Activated CD4-positive, alpha-beta T cell treated with anti-CD3 and anti-CD28 coated beads for 36 hours (primary cell): ENCODE measurements at regions of chr1 and their contacts with region 1.

Region 1: DNA sequence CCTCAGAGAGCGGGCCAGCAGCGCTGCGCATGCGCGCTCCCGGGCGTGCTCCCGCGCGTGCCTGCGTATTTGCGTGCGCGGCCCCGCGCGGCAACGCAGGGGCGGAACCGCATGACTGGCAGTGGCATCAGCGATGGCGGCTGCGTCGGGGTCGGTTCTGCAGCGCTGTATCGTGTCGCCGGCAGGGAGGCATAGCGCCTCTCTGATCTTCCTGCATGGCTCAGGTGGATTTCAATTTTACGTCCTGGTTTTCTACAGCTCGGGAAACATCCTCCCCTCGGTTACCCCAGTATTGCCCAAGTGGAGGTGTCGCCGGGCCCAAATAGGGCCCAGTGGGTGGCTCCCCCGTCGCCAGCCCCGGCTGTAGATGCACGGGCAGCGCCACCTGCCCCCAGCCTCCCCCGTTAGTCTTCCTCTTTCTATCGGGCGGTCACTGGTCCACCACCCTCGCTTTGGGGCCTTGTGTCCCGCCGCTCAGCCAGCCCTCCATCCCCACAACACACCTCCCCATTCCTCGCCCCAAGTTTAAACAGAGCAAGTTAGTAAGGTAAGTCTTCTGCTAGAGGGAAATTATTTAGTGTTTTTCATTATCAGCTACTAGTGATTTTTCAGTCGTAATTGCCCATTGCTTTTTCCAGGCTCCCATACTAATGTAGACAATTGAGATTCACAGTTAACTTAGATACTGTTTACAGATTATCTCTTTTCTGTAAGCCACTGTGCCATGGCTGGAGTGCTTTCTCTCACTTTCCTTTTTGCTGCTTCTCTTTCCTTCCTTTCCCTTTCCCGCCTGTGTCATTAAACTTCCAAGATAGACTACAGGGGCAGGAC is at the start of gene LYPLAL1:
- DNase-seq: peak; percentile 93
- ATAC-seq: peak; percentile 87
- H3K4me3 Mint-ChIP-seq: peak within 1 kb of the TSS; percentile 92
- H3K27ac Mint-ChIP-seq: peak within 1 kb of the TSS; percentile 99
- H3K4me1 Mint-ChIP-seq: peaks cover 49% of the 10 kb centered on the region
- H3K27me3 Mint-ChIP-seq: no peaks in the 10 kb centered on the region
- total RNA-seq, gene LYPLAL1: 25.3 to 27.9 TPM

Region 2: GRCh38 chr1:218284934-218285635 is 888.9 kb before region 1 on chr1 and contains the start of gene RRP15:
- CTCF ChIA-PET with region 1: no interaction called
- POLR2A ChIA-PET with region 1: no interaction called
- intact Hi-C with region 1: loop called in 1 of 2 experiments (anchors 1 kb)
- DNase-seq: peak; percentile 93
- ATAC-seq: peak; percentile 99
- H3K4me3 Mint-ChIP-seq: peak within 1 kb of the TSS; percentile 94
- H3K27ac Mint-ChIP-seq: peak within 1 kb of the TSS; percentile 91
- H3K4me1 Mint-ChIP-seq: peaks cover 32% of the 10 kb centered on the region
- H3K27me3 Mint-ChIP-seq: peaks cover 10% of the 10 kb centered on the region
- total RNA-seq, gene RRP15: 23.3 to 30.5 TPM

Region 3: GRCh38 chr1:218377143-218377660 is 796.8 kb before region 1 on chr1:
- CTCF ChIA-PET with region 1: no interaction called
- POLR2A ChIA-PET with region 1: no interaction called
- intact Hi-C with region 1: loop called in 1 of 2 experiments (anchors 1 kb)
- DNase-seq: peak; percentile 77
- ATAC-seq: peak; percentile 94
- H3K4me3 Mint-ChIP-seq: no peak overlapping the region
- H3K27ac Mint-ChIP-seq: peak overlapping the region; percentile 31
- H3K4me1 Mint-ChIP-seq: peaks cover 8% of the 10 kb centered on the region
- H3K27me3 Mint-ChIP-seq: peaks cover 54% of the 10 kb centered on the region

Region 4: DNA sequence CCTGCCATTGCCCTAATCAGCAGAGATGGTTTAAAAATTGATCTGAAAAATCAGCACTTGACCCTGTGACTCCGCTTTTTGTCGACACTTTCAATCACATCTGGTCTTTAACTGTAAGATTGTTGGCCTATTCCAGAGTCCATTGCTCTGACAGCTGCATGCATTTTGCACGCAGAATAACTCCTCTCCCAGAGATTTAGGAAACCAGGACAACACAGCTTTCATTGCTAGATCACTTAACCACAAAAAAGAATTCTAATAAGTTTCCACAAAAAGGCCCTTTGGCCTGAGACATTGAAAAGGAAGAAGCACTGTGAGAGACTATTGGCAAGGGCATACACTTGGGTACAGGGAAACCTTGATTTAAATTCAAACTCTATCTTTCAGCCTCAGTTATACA is 455.8 kb before region 1 on chr1:
- CTCF ChIA-PET with region 1: no interaction called
- POLR2A ChIA-PET with region 1: no interaction called
- intact Hi-C with region 1: no loop called
- DNase-seq: no peak
- ATAC-seq: no peak
- H3K4me3 Mint-ChIP-seq: no peak overlapping the region
- H3K27ac Mint-ChIP-seq: no peak overlapping the region
- H3K4me1 Mint-ChIP-seq: no peaks in the 10 kb centered on the region
- H3K27me3 Mint-ChIP-seq: no peaks in the 10 kb centered on the region

Region 5: GRCh38 chr1:219189021-219189824 is 15.2 kb after region 1 on chr1:
- CTCF ChIA-PET with region 1: interaction called, 21 read pairs
- POLR2A ChIA-PET with region 1: no interaction called
- intact Hi-C with region 1: loop called (anchors 1 kb)
- DNase-seq: no peak
- ATAC-seq: peak; percentile 92
- H3K4me3 Mint-ChIP-seq: no peak overlapping the region
- H3K27ac Mint-ChIP-seq: no peak overlapping the region
- H3K4me1 Mint-ChIP-seq: peaks cover 34% of the 10 kb centered on the region
- H3K27me3 Mint-ChIP-seq: no peaks in the 10 kb centered on the region

Region 6: DNA sequence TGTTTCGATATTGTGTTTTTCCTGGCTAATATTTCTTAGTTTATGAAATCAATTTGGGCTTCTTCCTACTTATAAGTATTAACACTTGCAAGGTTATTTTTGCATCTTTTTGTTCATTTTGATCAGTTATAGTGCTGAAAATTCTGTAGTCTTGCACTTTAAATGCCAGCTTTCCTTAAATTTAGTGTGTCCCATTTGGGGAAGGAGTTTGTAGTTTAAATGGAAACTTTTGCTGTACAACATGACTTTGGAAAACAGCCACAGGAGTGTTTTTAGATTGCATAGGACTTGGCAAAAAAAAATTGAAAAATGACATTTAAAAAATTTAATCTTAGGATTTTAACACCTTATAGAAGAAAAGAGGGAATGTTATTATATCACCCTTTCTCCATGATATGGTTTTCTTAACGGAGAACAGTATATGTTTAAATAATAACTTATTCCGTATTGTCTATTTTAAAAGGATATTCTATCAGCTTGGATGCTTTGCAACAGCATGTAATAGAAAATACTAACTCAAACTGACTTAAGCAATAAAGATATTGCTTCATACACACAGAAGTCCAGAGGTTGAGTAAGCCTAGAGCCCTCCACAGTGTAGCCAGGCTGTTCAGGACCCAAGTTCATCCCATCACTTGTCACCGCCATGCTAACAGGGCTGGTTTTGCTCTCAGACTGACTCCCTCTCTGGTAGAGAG is 53.5 kb after region 1 on chr1:
- CTCF ChIA-PET with region 1: no interaction called
- POLR2A ChIA-PET with region 1: no interaction called
- intact Hi-C with region 1: no loop called
- DNase-seq: no peak
- ATAC-seq: no peak
- H3K4me3 Mint-ChIP-seq: no peak overlapping the region
- H3K27ac Mint-ChIP-seq: no peak overlapping the region
- H3K4me1 Mint-ChIP-seq: no peaks in the 10 kb centered on the region
- H3K27me3 Mint-ChIP-seq: no peaks in the 10 kb centered on the region

Region 7: GRCh38 chr1:219264561-219264960 is 90.6 kb after region 1 on chr1:
- CTCF ChIA-PET with region 1: no interaction called
- POLR2A ChIA-PET with region 1: no interaction called
- intact Hi-C with region 1: no loop called
- DNase-seq: no peak
- ATAC-seq: no peak
- H3K4me3 Mint-ChIP-seq: no peak overlapping the region
- H3K27ac Mint-ChIP-seq: no peak overlapping the region
- H3K4me1 Mint-ChIP-seq: no peaks in the 10 kb centered on the region
- H3K27me3 Mint-ChIP-seq: no peaks in the 10 kb centered on the region

Region 8: GRCh38 chr1:219340796-219341195 is 166.8 kb after region 1 on chr1:
- CTCF ChIA-PET with region 1: no interaction called
- POLR2A ChIA-PET with region 1: no interaction called
- intact Hi-C with region 1: no loop called
- DNase-seq: no peak
- ATAC-seq: no peak
- H3K4me3 Mint-ChIP-seq: no peak overlapping the region
- H3K27ac Mint-ChIP-seq: no peak overlapping the region
- H3K4me1 Mint-ChIP-seq: no peaks in the 10 kb centered on the region
- H3K27me3 Mint-ChIP-seq: no peaks in the 10 kb centered on the region

Region 9: DNA sequence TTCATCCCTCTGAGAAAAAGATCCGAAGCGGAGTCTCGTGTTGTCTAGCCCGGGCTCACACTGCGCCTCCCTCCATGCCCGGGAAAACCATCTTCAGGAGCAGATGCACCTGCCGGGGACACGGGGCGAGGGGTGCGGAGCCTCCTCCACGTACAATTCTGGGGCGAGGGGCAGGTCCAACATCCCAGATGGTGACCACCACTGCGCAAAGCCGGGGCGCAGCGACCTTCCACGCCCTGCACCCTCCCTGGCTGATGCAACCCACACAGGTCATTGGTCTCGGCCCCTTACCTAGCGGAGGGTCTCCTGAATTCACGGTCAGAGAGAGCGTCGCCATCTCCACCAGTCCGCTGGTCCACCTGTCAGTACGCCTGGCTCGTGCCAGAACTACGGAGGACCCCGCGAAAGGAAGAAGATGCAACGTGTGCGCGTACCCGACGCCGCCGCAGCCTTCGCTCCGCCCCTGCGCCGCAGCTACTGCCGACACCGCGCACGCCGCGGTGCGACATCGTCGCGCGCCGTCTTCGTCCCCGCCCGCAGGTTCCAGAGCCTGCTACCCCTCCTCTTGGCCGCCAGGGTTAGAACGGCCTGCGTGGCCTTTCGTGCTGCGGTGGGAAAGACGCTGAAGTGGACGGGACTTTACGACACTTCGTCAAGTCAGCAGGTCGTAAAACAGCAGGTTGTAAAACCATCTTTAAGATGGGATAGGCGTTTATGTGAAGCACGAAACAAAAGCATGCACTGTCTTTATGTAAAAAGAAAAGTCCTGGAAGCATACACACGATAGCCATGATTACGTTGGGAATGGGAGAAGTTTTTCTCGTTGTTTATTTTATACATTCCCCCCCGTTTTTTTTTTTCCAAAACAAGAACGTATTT is 872.3 kb after region 1 on chr1 and contains the start of gene EPRS1:
- CTCF ChIA-PET with region 1: no interaction called
- POLR2A ChIA-PET with region 1: no interaction called
- intact Hi-C with region 1: loop called in 1 of 2 experiments (anchors 5 kb)
- DNase-seq: peak; percentile 96
- ATAC-seq: peak; percentile 98
- H3K4me3 Mint-ChIP-seq: peak within 1 kb of the TSS; percentile 100
- H3K27ac Mint-ChIP-seq: peak within 1 kb of the TSS; percentile 98
- H3K4me1 Mint-ChIP-seq: peaks cover 36% of the 10 kb centered on the region
- H3K27me3 Mint-ChIP-seq: no peaks in the 10 kb centered on the region
- total RNA-seq, gene EPRS1: 229 to 301 TPM